ENCODE measurements at regions of chr16 and their contacts with region 1.

Region 1: GRCh38 chr16:84548971-84549844 is 44.7 kb upstream of the MEAK7 start:
- DNase-seq: peak; percentile 87
- H3K4me3 Mint-ChIP-seq: peak overlapping the region; percentile 95
- H3K27ac Mint-ChIP-seq: peak overlapping the region; percentile 99
- H3K4me1 Mint-ChIP-seq: peaks cover 63% of the 10 kb centered on the region
- H3K27me3 Mint-ChIP-seq: no peaks in the 10 kb centered on the region

Region 2: GRCh38 chr16:84498859-84499620 is 50.2 kb before region 1 on chr16:
- intact Hi-C with region 1: no loop called
- DNase-seq: no peak
- H3K4me3 Mint-ChIP-seq: no peak overlapping the region
- H3K27ac Mint-ChIP-seq: no peak overlapping the region
- H3K4me1 Mint-ChIP-seq: peaks cover 7% of the 10 kb centered on the region
- H3K27me3 Mint-ChIP-seq: no peaks in the 10 kb centered on the region

Region 3: GRCh38 chr16:84511180-84511824 is 37.9 kb before region 1 on chr16:
- intact Hi-C with region 1: loop called (anchors 1 kb)
- DNase-seq: peak; percentile 95
- H3K4me3 Mint-ChIP-seq: peak overlapping the region; percentile 10
- H3K27ac Mint-ChIP-seq: peak overlapping the region; percentile 77
- H3K4me1 Mint-ChIP-seq: peaks cover 58% of the 10 kb centered on the region
- H3K27me3 Mint-ChIP-seq: no peaks in the 10 kb centered on the region

Region 4: GRCh38 chr16:84599521-84600202 is 50.5 kb after region 1 on chr16:
- intact Hi-C with region 1: loop called (anchors 1 kb)
- DNase-seq: peak; percentile 87
- H3K4me3 Mint-ChIP-seq: peak overlapping the region; percentile 87
- H3K27ac Mint-ChIP-seq: peak overlapping the region; percentile 99
- H3K4me1 Mint-ChIP-seq: peaks cover 79% of the 10 kb centered on the region
- H3K27me3 Mint-ChIP-seq: no peaks in the 10 kb centered on the region

Region 5: DNA sequence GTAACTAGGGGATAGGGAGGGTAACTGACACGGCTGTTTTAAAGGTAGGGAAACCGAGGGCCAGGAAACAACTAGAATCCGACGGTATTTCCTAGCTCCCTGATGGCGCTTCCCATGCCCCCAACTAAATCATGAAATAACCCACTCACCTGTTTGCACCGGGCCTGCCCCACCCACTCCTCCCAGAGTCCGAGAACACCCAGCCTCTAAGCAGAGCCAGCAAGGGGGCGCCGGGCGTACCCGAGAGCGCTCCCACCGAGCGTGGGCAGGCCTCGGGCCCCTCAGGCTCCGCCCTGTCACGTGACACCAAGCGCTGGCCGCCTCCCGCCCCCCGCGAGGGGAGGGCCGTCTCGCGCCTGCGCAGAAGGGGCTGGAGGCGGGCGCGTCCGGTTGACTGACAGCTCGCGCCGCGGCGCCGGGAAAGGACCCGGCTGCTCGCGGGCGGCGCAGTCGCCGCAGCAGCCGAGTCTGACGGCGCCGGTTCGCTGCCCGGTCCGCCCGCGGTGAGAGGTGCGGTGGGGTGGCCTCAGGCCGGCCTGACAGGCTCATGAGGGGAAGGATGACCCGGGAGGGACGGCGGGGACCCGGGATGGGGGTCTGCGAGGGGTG is 478.2 kb after region 1 on chr16 and contains the start of gene KIAA0513:
- intact Hi-C with region 1: loop called (anchors 5 kb)
- DNase-seq: peak; percentile 99
- H3K4me3 Mint-ChIP-seq: peak within 1 kb of the TSS; percentile 89
- H3K27ac Mint-ChIP-seq: peak within 1 kb of the TSS; percentile 93
- H3K4me1 Mint-ChIP-seq: peaks cover 36% of the 10 kb centered on the region
- H3K27me3 Mint-ChIP-seq: peaks cover 1% of the 10 kb centered on the region
- total RNA-seq, gene KIAA0513: 10.6 and 12.1 TPM in 2 replicates